ENCODE measurements at regions of chr5 and their contacts with region 1.

Region 1: DNA sequence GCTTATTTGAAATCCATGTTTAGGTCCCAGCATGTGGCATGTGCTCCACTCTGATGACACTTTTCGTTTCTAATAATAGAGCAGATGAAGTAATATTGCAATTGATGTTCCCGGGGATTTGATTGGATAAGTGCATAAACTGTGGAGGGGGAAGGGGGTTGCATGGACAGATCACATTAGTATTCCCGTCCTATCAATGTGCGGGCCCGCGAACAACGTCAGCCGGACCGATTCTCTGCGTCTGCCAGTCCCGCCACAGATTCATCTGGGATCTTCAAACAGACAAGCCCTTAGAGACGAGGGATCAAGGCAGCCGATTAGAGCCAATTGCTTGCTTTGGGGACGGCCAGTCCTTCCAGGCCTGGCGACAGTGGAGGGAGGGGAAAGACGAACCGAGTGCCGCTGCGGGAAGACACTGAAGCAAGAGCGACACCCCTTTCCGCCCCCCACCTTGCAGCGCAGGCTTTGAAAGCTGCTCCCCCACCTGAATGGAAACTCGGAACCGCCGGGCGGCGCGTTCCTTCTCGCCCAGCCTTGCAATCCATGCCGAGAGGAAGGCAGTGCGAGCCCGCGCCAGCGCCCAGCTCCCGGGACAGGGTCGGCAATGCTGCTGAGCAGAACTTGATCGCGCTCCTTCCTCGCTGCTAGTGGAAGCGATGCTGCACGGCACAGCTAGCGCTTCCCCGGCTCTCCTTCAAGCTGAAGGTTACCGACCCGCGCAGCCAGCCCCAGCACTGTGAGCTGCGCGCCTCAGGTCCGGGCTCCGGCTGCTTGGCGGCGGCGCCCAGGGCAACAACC is at the start of gene RGS7BP:
- DNase-seq: peak; percentile 52
- ATAC-seq: peak; percentile 93
- H3K4me3 ChIP-seq: peak within 1 kb of the TSS; percentile 82
- H3K27ac ChIP-seq: no peak within 1 kb of the TSS
- H3K4me1 ChIP-seq: no peaks in the 10 kb centered on the region; the same call in 1 of the 2 replicates
- H3K27me3 ChIP-seq: no peaks in the 10 kb centered on the region
- CTCF ChIP-seq: no peak
- total RNA-seq, gene RGS7BP: 1.2 and 2.1 TPM in 2 replicates

Region 2: DNA sequence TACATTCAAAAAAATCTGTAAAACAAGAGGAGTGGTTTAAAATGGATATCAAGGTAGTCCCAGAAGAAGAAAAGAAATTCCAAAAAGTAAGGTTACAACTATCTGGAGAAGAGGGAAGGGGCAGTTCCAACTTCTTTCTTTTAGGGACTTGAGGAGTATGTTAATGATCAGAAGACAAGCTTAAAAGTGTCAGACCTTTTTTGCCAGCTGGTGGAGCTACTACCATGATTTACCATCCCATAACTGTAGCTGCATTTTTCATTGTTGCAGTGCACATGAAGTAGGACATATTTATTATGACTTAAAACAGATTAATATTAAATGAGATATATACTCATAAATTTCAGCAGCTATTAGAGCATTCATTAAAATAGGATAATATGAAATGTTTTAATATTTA is 158.7 kb before region 1 on chr5:
- CTCF ChIA-PET with region 1: no interaction called
- POLR2A ChIA-PET with region 1: no interaction called
- intact Hi-C with region 1: loop called (anchors 2 kb)
- DNase-seq: peak; percentile 43
- ATAC-seq: peak; percentile 67
- H3K4me3 ChIP-seq: no peak overlapping the region
- H3K27ac ChIP-seq: no peak overlapping the region
- H3K4me1 ChIP-seq: no peaks in the 10 kb centered on the region
- H3K27me3 ChIP-seq: no peaks in the 10 kb centered on the region
- CTCF ChIP-seq: peak; percentile 49

Region 3: DNA sequence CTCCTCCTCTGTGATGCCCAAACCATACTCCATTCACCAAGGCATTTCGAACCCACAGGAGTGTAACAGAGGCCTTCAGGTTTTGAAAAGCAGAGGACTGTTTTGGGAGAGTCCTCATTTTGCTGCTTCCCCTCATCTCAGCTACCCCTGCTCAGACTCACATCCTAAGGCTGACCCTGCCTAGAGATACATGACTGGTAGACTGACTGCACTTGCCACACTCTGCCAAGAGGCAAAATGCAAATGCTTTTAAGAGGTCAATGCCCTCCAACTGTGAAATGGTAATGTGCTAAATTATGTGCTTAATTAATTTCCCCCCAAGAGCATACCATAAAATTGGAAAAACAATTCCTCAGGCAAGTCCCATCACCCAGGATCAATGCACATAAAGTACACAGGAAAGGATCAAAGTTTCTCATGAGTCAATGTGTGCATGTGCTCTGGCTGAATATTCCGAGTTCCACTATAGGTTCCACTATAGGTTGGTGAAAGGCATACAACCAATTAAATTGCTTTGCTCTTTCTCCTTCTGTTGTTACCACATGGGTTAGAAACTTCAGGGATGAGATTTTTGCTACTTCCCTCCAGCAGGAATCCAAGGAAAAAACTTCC is 86.9 kb after region 1 on chr5:
- CTCF ChIA-PET with region 1: interaction called, 7 read pairs
- POLR2A ChIA-PET with region 1: no interaction called
- intact Hi-C with region 1: loop called (anchors 1 kb)
- DNase-seq: no peak
- ATAC-seq: no peak
- H3K4me3 ChIP-seq: no peak overlapping the region
- H3K27ac ChIP-seq: no peak overlapping the region
- H3K4me1 ChIP-seq: no peaks in the 10 kb centered on the region
- H3K27me3 ChIP-seq: no peaks in the 10 kb centered on the region
- CTCF ChIP-seq: no peak